BJ (cell line): ENCODE measurements at regions of chrX and their contacts with region 1.

Region 1: DNA sequence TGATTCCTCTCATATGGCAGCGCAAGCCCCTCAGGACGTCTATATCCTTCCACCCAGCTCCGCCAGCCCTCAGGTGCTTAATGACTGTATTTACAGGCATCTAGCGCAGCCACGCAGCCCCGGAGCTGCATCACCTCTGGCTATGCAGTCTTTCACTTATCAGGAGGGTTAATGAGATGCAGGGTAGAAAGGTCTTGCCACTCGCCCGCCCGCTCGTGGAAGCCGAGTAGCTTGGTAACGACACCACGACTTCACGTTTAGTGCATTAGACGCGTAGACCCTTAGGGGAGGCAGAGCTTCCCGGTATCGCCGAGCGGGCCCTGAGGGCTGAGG is 1.5 kb upstream of the SLC16A2 start:
- DNase-seq: no peak
- H3K4me3 ChIP-seq: peak overlapping the region; percentile 62
- H3K27me3 ChIP-seq: no peaks in the 10 kb centered on the region
- CTCF ChIP-seq: no peak

Region 2: DNA sequence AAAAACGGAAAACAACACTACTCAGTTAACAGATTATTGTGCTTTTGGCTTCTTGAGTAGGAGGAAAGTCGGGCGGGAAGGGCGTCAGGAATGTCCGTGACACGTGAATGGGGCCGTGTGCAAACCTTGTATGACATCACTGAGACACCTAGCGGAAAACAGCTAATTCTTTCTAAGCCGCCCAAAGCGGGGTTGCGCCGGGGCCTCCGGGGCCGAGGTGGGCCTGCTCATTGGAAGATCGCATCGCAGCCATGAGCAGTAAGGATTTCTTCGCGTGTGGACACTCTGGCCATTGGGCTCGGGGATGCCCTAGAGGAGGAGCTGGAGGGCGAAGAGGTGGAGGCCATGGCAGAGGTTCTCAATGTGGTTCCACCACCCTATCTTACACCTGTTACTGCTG is 115.8 kb before region 1 on chrX and contains the start of gene ZCCHC13:
- CTCF ChIA-PET with region 1: no interaction called
- POLR2A ChIA-PET with region 1: interaction called, 14 read pairs
- DNase-seq: no peak
- H3K4me3 ChIP-seq: no peak within 1 kb of the TSS
- H3K27me3 ChIP-seq: no peaks in the 10 kb centered on the region
- CTCF ChIP-seq: no peak
- polyA plus RNA-seq, gene ZCCHC13: not detected in 2 replicates

Region 3: GRCh38 chrX:74656079-74656745 is 236.4 kb after region 1 on chrX:
- CTCF ChIA-PET with region 1: no interaction called
- POLR2A ChIA-PET with region 1: no interaction called
- DNase-seq: no peak
- H3K4me3 ChIP-seq: no peak overlapping the region
- H3K27me3 ChIP-seq: no peaks in the 10 kb centered on the region
- CTCF ChIP-seq: no peak